Motor neuron (in vitro differentiated cells): ENCODE measurements at regions of chr18 and their contacts with region 1.

Region 1: DNA sequence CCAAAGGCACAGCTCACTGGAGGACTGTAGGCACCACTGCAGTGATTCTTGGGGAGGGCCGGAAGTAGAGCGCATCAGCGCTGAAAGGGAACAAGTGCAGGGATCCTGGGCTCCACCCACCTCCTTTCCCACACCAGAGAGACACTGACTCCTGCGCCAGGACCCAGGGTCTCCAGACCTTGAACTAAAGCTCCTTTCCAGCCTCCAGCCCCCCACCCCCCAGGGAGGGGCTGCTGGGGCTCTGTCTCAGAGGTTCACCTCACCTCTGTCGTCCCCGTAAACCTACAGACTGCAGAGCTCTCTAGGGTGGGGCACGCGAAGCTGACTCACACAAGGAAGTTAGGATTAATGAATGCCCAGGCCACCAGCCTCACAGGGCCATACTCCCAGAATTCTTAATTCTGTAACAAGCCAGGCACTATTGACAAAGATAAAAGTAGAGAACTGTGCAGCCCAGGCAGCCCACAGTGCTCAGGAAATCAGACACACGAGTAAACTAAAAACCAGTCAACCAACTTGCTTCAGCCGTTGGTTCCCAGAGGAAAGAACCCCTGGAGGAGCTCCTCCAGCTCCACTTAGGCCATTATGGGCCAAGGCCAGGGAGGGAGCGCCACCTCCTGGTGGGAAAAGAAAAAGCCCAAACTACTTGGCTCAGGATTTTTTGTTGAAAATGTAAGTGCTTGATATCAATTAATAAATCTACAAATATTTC is 45.1 kb upstream of the ACAA2 start:
- ATAC-seq: peak; percentile 70 to 94 (median 86)
- H3K4me3 ChIP-seq: no peak overlapping the region
- H3K27ac ChIP-seq: no peak overlapping the region
- H3K4me1 ChIP-seq: peaks cover 0 to 4% of the 10 kb centered on the region in 2 donors

Region 2: GRCh38 chr18:49510393-49511115 is 347.9 kb before region 1 on chr18:
- in situ Hi-C with region 1: loop called in 8 of 9 experiments (anchors 10 to 25 kb)
- ATAC-seq: peak; percentile 55 to 87 (median 74)
- H3K4me3 ChIP-seq: no peak overlapping the region
- H3K27ac ChIP-seq: no peak overlapping the region
- H3K4me1 ChIP-seq: peaks cover 0 to under 1% of the 10 kb centered on the region in 2 donors